PC-9 (cell line): ENCODE measurements at regions of chrX and their contacts with region 1.

Region 1: DNA sequence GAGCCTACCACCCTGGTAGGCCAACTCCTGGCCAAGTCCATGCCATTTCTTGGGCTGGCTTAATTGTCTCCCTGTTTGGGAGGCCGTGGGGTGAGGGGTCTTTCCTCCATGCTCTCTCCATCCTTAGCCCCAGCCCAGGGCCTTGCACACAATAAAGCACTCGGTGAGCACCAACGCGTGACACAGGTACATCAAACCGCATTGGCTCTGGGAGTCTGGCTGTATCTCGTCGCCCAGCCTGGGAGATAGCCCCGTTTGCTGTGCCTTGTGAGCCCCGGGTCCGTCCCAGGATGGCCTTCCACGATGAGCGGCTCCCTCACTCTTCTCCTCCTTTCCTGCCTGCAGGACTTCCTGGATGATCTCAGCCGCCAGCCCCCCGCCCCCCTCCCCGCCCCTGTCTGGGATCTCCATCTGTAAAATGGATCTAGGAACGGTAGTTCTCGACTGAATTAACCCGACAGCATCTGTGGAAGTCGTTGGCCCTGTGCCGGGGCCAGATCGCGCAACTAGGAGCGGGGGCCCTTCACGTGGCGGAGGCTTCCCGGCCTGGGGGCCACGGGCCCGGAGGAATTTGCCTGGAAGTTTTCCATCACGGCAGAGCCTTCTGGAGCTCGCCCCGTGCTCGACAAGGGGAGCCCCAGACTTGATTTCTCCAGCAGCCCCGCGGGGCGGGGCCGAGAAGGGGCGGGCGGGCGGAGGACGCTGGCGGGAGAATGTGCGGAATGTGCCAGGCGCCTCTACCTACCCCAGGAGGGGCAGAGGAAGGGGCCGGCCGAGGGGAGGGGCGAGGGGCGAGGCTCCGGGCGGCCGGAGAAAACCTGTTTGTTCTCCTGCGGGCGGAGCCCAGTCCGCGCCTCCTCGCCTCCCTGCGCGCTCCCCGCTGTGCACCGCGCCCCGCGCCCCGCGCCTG is at the start of gene ZNF185:
- DNase-seq: peak; percentile 81 to 91
- H3K4me3 ChIP-seq: peak within 1 kb of the TSS; percentile 65
- H3K27ac ChIP-seq: peak within 1 kb of the TSS; percentile 91
- H3K4me1 ChIP-seq: peaks cover 73% of the 10 kb centered on the region
- H3K27me3 ChIP-seq: no peaks in the 10 kb centered on the region
- CTCF ChIP-seq: no peak
- total RNA-seq, gene ZNF185: 40.6 and 42.8 TPM in 2 replicates

Region 2: GRCh38 chrX:152830312-152831305 is 66.9 kb before region 1 on chrX and contains the starts of genes CETN2 and NSDHL:
- CTCF ChIA-PET with region 1: no interaction called
- POLR2A ChIA-PET with region 1: interaction called, 5 read pairs
- intact Hi-C with region 1: loop called (anchors 1 kb)
- DNase-seq: peak; percentile 97 to 99
- H3K4me3 ChIP-seq: peak within 1 kb of the TSS; percentile 97
- H3K27ac ChIP-seq: peak within 1 kb of the TSS; percentile 53
- H3K4me1 ChIP-seq: peaks cover 24% of the 10 kb centered on the region
- H3K27me3 ChIP-seq: no peaks in the 10 kb centered on the region
- CTCF ChIP-seq: 0 out of 2 replicates have a peak, but pooled peaks have one; percentile 18
- total RNA-seq, gene CETN2: 66.9 and 78.6 TPM in 2 replicates
- total RNA-seq, gene NSDHL: 40.9 and 55.1 TPM in 2 replicates

Region 3: DNA sequence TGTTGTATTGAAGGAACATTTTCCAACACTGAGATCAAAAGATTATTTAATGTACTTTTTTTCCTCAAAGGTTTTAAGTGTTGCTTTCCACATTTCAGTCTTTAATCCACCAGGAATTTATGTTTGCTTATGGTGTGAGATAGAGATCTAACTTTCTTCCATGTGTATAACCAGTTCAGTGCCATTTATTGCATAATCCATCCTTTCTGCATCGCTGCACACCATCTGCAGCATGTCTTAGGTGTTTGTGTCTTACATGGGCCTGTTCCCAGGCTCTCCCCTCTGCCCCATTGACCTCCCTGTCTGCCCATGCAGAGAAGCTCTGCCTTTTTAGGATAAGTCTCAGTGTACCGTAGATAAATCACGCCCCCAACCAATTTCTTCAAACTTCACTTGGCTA is 36.4 kb before region 1 on chrX:
- CTCF ChIA-PET with region 1: no interaction called
- POLR2A ChIA-PET with region 1: interaction called, 3 read pairs
- intact Hi-C with region 1: loop called (anchors 2 kb)
- DNase-seq: peak; percentile 38 to 90
- H3K4me3 ChIP-seq: no peak overlapping the region
- H3K27ac ChIP-seq: 0 out of 2 replicates have a peak overlapping the region, but pooled peaks have one; percentile 1
- H3K4me1 ChIP-seq: peaks cover 18% of the 10 kb centered on the region
- H3K27me3 ChIP-seq: no peaks in the 10 kb centered on the region
- CTCF ChIP-seq: no peak

Region 4: GRCh38 chrX:152915527-152916241 is 18.2 kb after region 1 on chrX:
- CTCF ChIA-PET with region 1: no interaction called
- POLR2A ChIA-PET with region 1: no interaction called
- intact Hi-C with region 1: loop called (anchors 2 kb)
- DNase-seq: peak; percentile 25 to 67
- H3K4me3 ChIP-seq: no peak overlapping the region
- H3K27ac ChIP-seq: peak overlapping the region; percentile 56
- H3K4me1 ChIP-seq: peaks cover 16% of the 10 kb centered on the region
- H3K27me3 ChIP-seq: no peaks in the 10 kb centered on the region
- CTCF ChIP-seq: peak; percentile 87